HepG2 (cell line): ENCODE measurements at regions of chr6 and their contacts with region 1.

Region 1: DNA sequence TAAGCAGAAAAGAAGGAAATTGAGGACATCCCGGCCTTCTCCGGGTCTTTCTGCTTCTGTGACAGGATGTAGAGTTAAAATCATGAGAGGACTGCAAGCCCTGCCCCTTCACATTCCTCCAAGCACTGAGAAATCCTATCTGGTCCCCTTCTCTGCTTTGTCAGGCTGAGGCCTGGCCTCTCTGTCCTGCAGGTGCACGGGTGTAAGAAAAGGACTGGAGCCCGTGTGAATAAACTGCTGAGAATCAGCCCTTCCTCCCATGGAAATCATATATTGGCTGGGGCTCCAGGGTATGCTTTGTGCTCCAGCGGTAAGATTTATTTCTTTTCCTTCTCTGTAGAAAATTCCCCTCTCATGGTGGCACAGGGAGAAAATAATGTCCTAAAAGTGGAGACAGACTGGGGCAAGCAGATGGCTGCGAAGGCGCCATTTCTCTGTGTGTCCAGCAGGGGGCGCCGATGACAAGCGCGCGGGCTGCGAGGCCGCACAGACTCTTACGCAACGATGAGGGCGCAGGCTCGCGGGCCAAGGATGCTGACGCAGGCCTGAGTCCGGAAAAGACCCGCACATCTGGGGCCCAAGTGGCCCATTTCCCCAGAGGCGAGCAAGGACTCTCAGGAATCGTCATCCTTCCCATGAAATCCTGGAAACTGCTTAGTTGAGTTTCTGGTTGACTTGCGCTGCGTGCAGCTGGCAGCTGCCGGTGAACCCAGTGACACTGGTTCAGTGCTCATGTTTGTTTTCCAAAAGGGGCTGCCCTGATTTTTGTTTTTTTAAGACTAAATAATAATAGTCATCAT is 258.6 kb downstream of the ADGB start:
- DNase-seq: peak; percentile 63
- ATAC-seq: peak; percentile 99
- H3K4me3 ChIP-seq: peak overlapping the region in 1 of 3 experiments; percentile 42; a peak in 1 of 6 replicates
- H3K27ac ChIP-seq: no peak overlapping the region
- H3K4me1 ChIP-seq: 0 out of 2 replicates have a peak, but pooled peaks cover 4% of the 10 kb centered on the region
- H3K27me3 ChIP-seq: no peaks in the 10 kb centered on the region; a peak in 2 of 5 replicates
- CTCF ChIP-seq: peak; percentile 99
- EP300 ChIP-seq: peak in 1 of 2 experiments; percentile 39; a peak in 1 of 4 replicates
- POLR2A ChIP-seq: no peak
- RAD21 ChIP-seq: peak; percentile 98

Region 2: DNA sequence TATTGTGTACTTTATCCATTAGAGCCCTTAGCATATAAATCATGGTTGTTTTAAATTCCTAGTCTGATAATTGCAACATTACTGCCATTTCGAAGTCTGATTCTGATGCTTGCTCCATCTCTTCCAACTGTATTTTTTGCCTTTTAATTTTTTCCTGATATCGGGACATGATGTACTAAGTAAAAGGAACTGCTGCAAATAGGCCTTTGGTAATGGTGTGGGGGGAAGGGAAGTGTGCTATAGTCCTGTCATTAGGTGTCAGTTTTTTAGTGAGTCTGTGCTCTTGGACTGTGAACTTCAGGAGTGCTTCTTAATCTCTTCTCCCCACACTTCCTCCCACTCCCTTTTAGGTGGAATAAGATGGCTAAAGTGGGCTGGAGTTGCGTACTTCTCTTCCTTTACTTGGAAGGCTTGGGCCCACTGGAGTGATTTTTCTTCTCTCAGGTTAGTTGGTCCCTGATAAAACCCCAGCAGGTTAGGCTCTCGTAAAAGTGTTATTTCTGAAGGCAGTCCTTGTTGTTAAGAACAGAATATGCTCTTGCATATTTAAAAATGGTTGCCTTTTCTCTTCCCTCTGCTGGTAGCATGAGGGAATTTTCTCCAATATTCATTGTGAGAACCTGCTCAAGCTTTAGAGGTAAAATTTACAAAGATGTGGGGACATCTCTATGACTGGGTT is 364.9 kb after region 1 on chr6:
- CTCF ChIA-PET with region 1: interaction called, 10 read pairs
- POLR2A ChIA-PET with region 1: no interaction called
- in situ Hi-C with region 1: no loop called
- intact Hi-C with region 1: loop called (anchors 1 kb)
- DNase-seq: peak; percentile 30
- ATAC-seq: peak; percentile 81
- H3K4me3 ChIP-seq: no peak overlapping the region
- H3K27ac ChIP-seq: no peak overlapping the region
- H3K4me1 ChIP-seq: no peaks in the 10 kb centered on the region
- H3K27me3 ChIP-seq: no peaks in the 10 kb centered on the region
- CTCF ChIP-seq: peak; percentile 27; the same call in 1 of the 2 replicates
- EP300 ChIP-seq: no peak
- POLR2A ChIP-seq: no peak
- RAD21 ChIP-seq: peak; percentile 25; the same call in 1 of the 2 replicates

Region 3: DNA sequence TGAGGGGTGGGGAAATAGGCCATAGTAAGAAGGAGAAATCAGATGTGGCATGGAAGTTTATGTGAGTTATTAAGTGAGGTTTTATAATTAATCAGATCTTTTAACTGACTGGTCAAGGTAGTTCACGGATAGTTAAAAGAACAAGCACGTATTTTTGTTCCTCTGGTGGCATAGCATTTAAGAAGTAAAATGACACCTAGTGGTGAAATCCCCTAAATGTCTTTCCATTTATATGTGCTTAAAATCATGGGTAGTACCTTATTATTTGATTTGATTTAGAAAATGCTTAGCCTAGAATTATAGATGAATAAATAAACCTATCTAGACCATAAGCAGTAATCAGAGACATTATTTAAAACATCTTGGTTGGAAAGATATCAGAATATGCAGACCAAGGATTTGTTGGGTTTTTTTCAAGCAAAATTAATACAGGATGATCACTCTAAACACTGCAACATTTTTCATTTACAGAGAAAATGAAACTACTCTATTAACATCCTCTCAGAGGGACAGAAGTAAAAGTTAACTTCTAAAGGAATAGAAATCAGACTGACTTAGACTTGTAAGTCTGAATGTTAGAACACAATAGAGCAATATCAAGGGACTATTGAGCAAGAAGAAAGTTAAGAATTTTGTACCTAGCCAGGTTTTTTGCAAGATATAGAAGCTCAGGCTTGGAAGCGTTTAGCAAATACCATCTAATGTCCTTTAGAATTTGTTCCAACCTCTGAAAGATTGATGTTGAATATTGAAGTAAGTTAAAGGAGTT is 427.9 kb after region 1 on chr6:
- CTCF ChIA-PET with region 1: interaction called, 15 read pairs
- POLR2A ChIA-PET with region 1: no interaction called
- in situ Hi-C with region 1: no loop called
- intact Hi-C with region 1: loop called (anchors 1 kb)
- DNase-seq: peak; percentile 46
- ATAC-seq: peak; percentile 65; the same call in 2 of the 3 replicates
- H3K4me3 ChIP-seq: no peak overlapping the region
- H3K27ac ChIP-seq: no peak overlapping the region
- H3K4me1 ChIP-seq: no peaks in the 10 kb centered on the region
- H3K27me3 ChIP-seq: no peaks in the 10 kb centered on the region
- CTCF ChIP-seq: peak; percentile 50
- EP300 ChIP-seq: no peak
- POLR2A ChIP-seq: no peak
- RAD21 ChIP-seq: no peak

Region 4: DNA sequence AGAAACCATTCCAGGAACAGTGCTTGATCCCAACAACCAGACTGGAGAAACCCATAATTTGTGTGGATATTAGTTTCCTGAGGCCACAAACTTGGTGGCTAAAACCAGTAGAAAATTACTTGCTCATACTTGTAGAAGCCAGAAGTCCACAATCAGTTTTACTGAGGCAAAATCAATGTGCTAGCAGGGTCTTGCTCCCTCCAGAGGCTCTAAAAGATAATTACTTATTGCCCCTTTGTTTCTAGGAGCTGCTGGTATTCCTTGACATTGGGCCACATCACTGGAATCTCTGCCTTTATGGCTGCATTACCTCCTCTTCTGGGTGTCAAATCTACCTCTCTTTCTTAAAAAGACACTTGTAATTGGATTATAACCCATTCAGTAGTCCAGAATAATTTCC is 508.9 kb after region 1 on chr6:
- CTCF ChIA-PET with region 1: no interaction called
- POLR2A ChIA-PET with region 1: no interaction called
- in situ Hi-C with region 1: no loop called
- intact Hi-C with region 1: loop called (anchors 5 kb)
- DNase-seq: peak; percentile 3
- ATAC-seq: peak; percentile 59
- H3K4me3 ChIP-seq: no peak overlapping the region
- H3K27ac ChIP-seq: no peak overlapping the region
- H3K4me1 ChIP-seq: no peaks in the 10 kb centered on the region
- H3K27me3 ChIP-seq: no peaks in the 10 kb centered on the region
- CTCF ChIP-seq: no peak
- EP300 ChIP-seq: no peak
- POLR2A ChIP-seq: no peak
- RAD21 ChIP-seq: no peak